ENCODE measurements at regions of chr16 and their contacts with region 1.

Region 1: DNA sequence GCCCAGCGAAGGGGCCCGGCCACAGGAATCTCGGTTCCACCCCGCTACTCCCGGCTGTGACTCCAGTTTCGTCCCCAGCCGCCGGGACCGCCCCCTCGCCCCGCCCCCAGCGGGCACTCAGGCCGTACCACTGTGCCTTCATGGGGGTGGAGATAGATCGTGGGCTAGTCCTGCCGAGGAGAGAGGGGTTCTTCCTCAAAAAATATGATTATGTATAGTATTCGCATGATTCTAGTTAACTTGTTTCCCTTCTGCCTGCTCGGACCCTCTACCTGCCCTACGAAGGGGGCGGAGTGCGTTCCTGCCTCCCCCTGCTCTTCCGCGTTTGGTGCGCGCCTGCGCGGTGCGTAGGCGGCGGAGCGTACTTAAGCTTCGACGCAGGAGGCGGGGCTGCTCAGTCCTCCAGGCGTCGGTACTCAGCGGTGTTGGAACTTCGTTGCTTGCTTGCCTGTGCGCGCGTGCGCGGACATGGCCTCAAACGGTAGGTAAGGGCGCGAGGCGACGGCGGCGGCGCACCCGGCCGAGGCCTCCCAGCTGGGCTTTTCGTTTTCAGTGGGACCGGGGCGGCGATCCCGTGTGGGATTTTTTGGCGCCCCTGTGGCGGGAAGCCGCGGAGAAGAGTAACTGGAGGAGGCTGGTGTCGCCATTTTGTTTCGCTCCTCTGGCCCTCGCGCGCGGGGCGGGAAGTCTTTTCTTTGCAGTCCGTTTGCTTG is at the start of gene FUS:
- DNase-seq: peak; percentile 91
- H3K4me3 Mint-ChIP-seq: peak within 1 kb of the TSS; percentile 93
- H3K27ac Mint-ChIP-seq: peak within 1 kb of the TSS; percentile 98
- H3K4me1 Mint-ChIP-seq: peaks cover 53% of the 10 kb centered on the region
- H3K27me3 Mint-ChIP-seq: peaks cover 2% of the 10 kb centered on the region
- total RNA-seq, gene FUS: 386 to 397 TPM

Region 2: GRCh38 chr16:31117391-31118197 is 62.3 kb before region 1 on chr16 and contains the start of gene KAT8:
- CTCF ChIA-PET with region 1: interaction called, 4 read pairs
- POLR2A ChIA-PET with region 1: interaction called, 28 read pairs
- DNase-seq: peak; percentile 98
- H3K4me3 Mint-ChIP-seq: peak within 1 kb of the TSS; percentile 73
- H3K27ac Mint-ChIP-seq: peak within 1 kb of the TSS; percentile 78
- H3K4me1 Mint-ChIP-seq: peaks cover 32% of the 10 kb centered on the region
- H3K27me3 Mint-ChIP-seq: no peaks in the 10 kb centered on the region
- total RNA-seq, gene KAT8: 43.7 to 44.3 TPM

Region 3: DNA sequence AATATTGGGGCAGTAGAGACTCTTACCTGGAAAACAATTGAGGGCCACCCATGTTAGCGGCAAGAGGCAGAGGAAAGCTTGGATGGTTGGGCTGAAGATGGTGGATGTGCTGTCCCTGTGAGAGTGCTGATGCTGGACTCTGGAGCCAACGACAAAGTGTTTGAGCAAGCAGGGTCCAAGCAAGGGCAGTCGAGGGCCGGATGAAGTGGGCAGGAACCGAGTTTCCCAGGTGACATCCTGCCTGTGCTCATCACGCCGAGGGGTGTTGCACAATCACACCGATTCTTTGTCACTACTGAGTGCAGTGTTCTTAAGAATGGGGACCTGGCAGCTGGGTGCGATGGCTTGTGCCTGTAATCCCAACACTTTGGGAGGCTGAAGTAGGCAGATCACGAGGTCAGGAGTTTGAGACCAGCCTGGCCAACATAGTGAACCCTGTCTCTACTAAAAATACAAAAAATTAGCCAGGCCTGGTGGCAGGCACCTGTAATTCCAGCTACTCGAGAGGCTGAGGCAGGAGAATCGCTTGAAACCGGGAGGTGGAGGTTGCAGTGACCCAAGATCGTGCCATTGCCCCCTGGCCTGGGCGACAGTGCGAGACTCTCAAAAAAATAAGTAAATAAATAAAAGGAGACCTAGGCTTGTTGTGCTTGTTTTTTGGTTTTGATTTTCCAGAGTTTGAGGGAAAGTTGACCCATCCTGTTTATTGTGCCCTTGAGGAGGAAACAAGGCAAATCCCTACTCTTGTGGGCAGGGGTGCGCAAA is 16.6 kb after region 1 on chr16:
- CTCF ChIA-PET with region 1: interaction called, 5 read pairs
- POLR2A ChIA-PET with region 1: interaction called, 77 read pairs
- DNase-seq: no peak
- H3K4me3 Mint-ChIP-seq: no peak overlapping the region
- H3K27ac Mint-ChIP-seq: peak overlapping the region; percentile 35
- H3K4me1 Mint-ChIP-seq: peaks cover 66% of the 10 kb centered on the region
- H3K27me3 Mint-ChIP-seq: no peaks in the 10 kb centered on the region

Region 4: GRCh38 chr16:31253642-31254045 is 73.7 kb after region 1 on chr16:
- CTCF ChIA-PET with region 1: no interaction called
- POLR2A ChIA-PET with region 1: interaction called, 13 read pairs
- DNase-seq: peak; percentile 75
- H3K4me3 Mint-ChIP-seq: peak overlapping the region; percentile 73
- H3K27ac Mint-ChIP-seq: peak overlapping the region; percentile 95
- H3K4me1 Mint-ChIP-seq: peaks cover 62% of the 10 kb centered on the region
- H3K27me3 Mint-ChIP-seq: no peaks in the 10 kb centered on the region

Region 5: GRCh38 chr16:31873556-31874365 is 693.9 kb after region 1 on chr16 and contains the start of gene ZNF267:
- CTCF ChIA-PET with region 1: no interaction called
- POLR2A ChIA-PET with region 1: interaction called, 15 read pairs
- DNase-seq: peak; percentile 95
- H3K4me3 Mint-ChIP-seq: peak within 1 kb of the TSS; percentile 87
- H3K27ac Mint-ChIP-seq: peak within 1 kb of the TSS; percentile 97
- H3K4me1 Mint-ChIP-seq: peaks cover 76% of the 10 kb centered on the region
- H3K27me3 Mint-ChIP-seq: no peaks in the 10 kb centered on the region
- total RNA-seq, gene ZNF267: 86.2 to 88.3 TPM